Activated CD8-positive, alpha-beta T cell treated with anti-CD3 and anti-CD28 coated beads, Interleukin-2, amount 10 ng/mL, durations not matched to agents 7 days and 5 days (primary cell): ENCODE measurements at regions of chr11 and their contacts with region 1.

Region 1: GRCh38 chr11:12331239-12331874 is 46.0 kb upstream of the PARVA start:
- DNase-seq: peak; percentile 79
- ATAC-seq: peak; percentile 61
- H3K4me3 Mint-ChIP-seq: no peak overlapping the region
- H3K27ac Mint-ChIP-seq: no peak overlapping the region
- H3K4me1 Mint-ChIP-seq: peaks cover 3% of the 10 kb centered on the region
- H3K27me3 Mint-ChIP-seq: peaks cover 2% of the 10 kb centered on the region

Region 2: DNA sequence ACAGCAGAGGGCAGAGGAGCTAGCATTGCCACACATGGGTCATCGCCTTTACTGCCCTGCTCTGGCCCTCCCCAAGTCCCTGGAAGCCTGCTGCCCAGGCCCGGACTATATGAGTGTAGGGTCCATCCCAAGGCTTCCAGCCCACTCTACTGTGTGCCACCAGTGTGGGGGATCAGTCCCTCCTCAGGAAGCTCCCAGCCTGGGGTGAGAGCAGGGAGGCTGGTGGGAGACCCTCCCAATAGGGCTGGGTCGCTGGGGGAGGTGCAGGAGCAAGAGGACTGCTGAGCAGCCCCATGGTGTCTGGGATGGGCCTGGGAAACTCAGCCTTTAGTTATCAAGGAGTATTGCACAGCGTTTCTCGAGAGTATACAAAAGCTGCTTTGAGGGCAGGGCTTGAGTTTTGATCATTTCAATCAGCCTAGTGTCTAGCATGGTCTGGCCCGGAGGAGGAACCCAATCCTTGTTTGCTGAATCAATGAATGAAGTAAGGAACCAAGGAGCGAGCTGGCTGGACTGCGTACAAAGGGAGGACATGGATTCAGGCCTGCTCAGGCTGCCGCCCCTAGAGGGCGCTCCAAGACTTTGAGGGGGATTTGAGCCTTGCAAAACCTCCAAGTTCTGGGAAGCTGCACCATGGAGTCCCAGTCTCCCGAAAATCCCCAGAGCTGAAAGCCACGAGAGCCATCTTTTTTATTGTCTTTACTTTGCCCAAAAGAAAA is 43.0 kb before region 1 on chr11:
- CTCF ChIA-PET with region 1: interaction called, 25 read pairs
- POLR2A ChIA-PET with region 1: no interaction called
- DNase-seq: peak; percentile 66
- ATAC-seq: peak; percentile 42
- H3K4me3 Mint-ChIP-seq: no peak overlapping the region
- H3K27ac Mint-ChIP-seq: no peak overlapping the region
- H3K4me1 Mint-ChIP-seq: peaks cover 18% of the 10 kb centered on the region
- H3K27me3 Mint-ChIP-seq: no peaks in the 10 kb centered on the region

Region 3: DNA sequence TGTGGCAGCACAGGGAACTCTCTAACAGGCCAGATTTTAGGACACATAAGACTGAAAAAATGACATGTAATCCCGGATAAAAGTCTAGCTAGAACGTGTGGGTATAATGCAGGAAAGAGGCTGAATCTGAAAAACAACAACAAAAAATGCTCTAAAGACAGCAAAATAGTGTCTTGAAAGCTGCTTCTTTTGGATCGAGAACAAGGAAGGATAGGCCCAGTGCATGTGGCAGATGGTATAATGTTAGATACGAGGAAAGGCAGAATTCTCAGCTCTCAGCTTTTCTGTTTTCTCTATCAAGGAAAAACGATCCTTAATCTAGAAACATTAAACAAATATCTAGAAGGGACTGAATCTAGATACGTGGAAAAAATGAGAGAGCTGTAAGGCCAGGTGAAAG is 12.2 kb after region 1 on chr11:
- CTCF ChIA-PET with region 1: interaction called, 13 read pairs
- POLR2A ChIA-PET with region 1: no interaction called
- DNase-seq: no peak
- ATAC-seq: no peak
- H3K4me3 Mint-ChIP-seq: no peak overlapping the region
- H3K27ac Mint-ChIP-seq: no peak overlapping the region
- H3K4me1 Mint-ChIP-seq: no peaks in the 10 kb centered on the region
- H3K27me3 Mint-ChIP-seq: no peaks in the 10 kb centered on the region

Region 4: GRCh38 chr11:12361682-12362081 is 30.3 kb after region 1 on chr11:
- CTCF ChIA-PET with region 1: interaction called, 24 read pairs
- POLR2A ChIA-PET with region 1: no interaction called
- DNase-seq: no peak
- ATAC-seq: no peak
- H3K4me3 Mint-ChIP-seq: no peak overlapping the region
- H3K27ac Mint-ChIP-seq: no peak overlapping the region
- H3K4me1 Mint-ChIP-seq: peaks cover 26% of the 10 kb centered on the region
- H3K27me3 Mint-ChIP-seq: no peaks in the 10 kb centered on the region

Region 5: GRCh38 chr11:12377824-12378593 is 46.7 kb after region 1 on chr11:
- CTCF ChIA-PET with region 1: interaction called, 15 read pairs
- POLR2A ChIA-PET with region 1: no interaction called
- DNase-seq: no peak
- ATAC-seq: peak; percentile 55
- H3K4me3 Mint-ChIP-seq: peak overlapping the region; percentile 50
- H3K27ac Mint-ChIP-seq: no peak overlapping the region
- H3K4me1 Mint-ChIP-seq: peaks cover 4% of the 10 kb centered on the region
- H3K27me3 Mint-ChIP-seq: peaks cover 53% of the 10 kb centered on the region

Region 6: GRCh38 chr11:12888525-12889158 is 557.3 kb after region 1 on chr11:
- CTCF ChIA-PET with region 1: interaction called, 85 read pairs
- POLR2A ChIA-PET with region 1: no interaction called
- DNase-seq: peak; percentile 75
- ATAC-seq: peak; percentile 60
- H3K4me3 Mint-ChIP-seq: no peak overlapping the region
- H3K27ac Mint-ChIP-seq: no peak overlapping the region
- H3K4me1 Mint-ChIP-seq: no peaks in the 10 kb centered on the region
- H3K27me3 Mint-ChIP-seq: peaks cover 3% of the 10 kb centered on the region